Endothelial cell of umbilical vein (primary cell): ENCODE measurements at regions of chr6 and their contacts with region 1.

Region 1: GRCh38 chr6:130810307-130811030 is 16.7 kb upstream of the SMLR1 start:
- DNase-seq: no peak
- H3K4me3 ChIP-seq: no peak overlapping the region
- H3K27ac ChIP-seq: no peak overlapping the region
- H3K4me1 ChIP-seq: no peaks in the 10 kb centered on the region
- H3K27me3 ChIP-seq: peaks cover 0 to 2% of the 10 kb centered on the region in 2 experiments
- CTCF ChIP-seq: no peak
- POLR2A ChIP-seq: no peak

Region 2: DNA sequence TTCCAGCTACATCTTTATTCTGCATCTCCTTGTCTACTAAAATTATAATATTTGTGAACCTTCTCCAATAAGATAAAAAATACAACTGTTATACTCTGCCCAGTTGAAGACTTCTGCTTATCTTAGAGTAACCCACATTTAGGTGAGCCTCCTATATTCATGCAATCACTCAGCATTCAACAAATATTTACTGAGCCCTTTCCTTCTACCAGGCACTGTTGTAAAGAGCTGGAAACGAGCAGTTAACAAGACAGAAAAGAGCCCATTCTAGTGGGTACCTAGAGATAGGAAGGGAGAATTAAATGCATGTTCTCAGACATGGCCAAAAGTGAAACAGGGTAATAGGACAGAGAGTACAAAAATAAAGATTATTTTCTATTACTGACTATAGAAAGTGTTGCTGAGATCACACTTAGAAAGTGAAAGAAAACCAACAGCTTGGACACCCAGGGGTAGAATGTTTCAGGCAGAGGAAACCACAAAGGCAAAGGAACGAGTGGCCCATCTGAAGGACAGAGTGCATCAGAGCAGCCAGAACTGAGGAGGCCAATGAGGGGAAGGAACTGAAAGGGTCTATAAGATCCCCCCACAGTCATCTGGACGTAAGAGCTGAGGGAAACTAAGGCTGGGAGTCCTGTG is 34.1 kb before region 1 on chr6:
- CTCF ChIA-PET with region 1: no interaction called
- POLR2A ChIA-PET with region 1: no interaction called
- dilution Hi-C with region 1: no loop called
- intact Hi-C with region 1: loop called (anchors 1 kb)
- DNase-seq: no peak
- H3K4me3 ChIP-seq: no peak overlapping the region
- H3K27ac ChIP-seq: no peak overlapping the region
- H3K4me1 ChIP-seq: no peaks in the 10 kb centered on the region
- H3K27me3 ChIP-seq: peaks cover 0 to 6% of the 10 kb centered on the region in 2 experiments
- CTCF ChIP-seq: no peak
- POLR2A ChIP-seq: no peak